ENCODE measurements at regions of chr20 and their contacts with region 1.

Region 1: DNA sequence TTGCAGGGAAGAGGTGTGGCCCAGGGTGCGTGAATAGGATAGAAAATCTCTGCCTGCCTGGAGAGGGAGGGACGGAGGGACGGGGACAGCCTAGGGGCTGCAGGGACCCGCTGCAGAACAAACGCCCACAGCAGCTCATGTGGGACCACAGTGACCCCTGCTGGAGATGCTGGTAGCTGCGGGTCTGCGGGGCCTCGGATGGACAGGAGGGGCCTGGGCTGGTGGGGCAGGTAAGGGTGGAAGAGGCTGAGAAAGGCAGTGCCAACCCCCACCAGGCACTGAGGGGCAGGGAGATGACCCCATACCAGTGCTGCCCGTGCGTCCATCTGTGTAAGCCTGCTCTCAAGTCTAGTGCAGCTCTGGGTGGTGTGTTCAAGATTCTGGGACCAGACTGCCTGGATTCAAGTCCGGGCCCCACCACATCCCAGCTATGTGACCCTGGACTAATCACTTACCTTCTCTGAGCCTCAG is 39.4 kb downstream of the KIAA1755 start:
- DNase-seq: peak; percentile 36 to 78 (median 68)
- H3K4me3 ChIP-seq: peak overlapping the region in 6 of 59 donors; percentile 1 to 34 (median 20)
- H3K27ac ChIP-seq: peak overlapping the region in 18 of 59 donors; percentile 0 to 68 (median 38)
- H3K27me3 ChIP-seq: no peaks in the 10 kb centered on the region
- CTCF ChIP-seq: peak; percentile 51 to 95 (median 86)

Region 2: DNA sequence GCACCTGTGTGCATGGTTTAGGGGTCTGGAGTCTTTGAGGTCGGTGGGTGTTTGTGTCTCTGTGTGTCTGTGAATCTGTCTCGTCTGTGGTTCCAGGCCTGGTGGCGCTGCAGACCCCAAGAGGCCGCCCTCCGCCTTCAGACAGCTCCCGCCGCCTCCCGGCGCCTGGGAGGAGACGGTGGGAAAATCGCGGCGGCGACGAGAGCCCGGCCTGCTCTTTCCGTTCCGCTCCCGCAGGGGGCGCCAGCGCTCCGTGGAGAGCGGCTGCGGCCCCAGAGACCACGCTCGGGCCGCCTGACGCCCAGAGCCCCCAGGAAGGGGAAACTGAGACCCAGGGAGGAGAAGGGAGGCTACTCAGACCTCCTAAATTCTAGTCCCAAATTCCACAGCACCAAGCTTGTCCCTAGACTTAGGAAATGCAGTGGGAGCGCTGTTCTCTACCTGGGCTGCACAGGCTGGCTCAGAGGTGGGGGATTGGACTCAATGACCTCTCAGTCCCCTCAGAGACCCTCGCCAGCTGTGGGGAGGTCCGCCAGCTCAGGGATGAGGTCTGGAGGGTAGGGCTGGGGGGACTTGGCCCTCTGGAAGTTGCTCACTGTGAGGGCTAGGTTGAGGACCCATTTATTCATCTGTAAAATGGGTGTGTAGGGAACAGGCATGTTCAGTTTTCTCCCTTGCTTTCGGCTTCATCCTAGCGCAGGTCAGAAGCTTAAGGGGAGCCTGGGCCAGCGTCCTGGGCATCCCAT is 656.6 kb before region 1 on chr20:
- intact Hi-C with region 1: loop called in 1 of 2 experiments (anchors 5 kb)
- DNase-seq: peak in 6 of 10 donors; percentile 20 to 79 (median 42)
- H3K4me3 ChIP-seq: peak overlapping the region in 10 of 59 donors; percentile 4 to 40 (median 20)
- H3K27ac ChIP-seq: no peak overlapping the region
- H3K27me3 ChIP-seq: peaks cover 0 to 32% (median 6%) of the 10 kb centered on the region in 45 donors
- CTCF ChIP-seq: peak; percentile 65 to 92 (median 84)

Region 3: DNA sequence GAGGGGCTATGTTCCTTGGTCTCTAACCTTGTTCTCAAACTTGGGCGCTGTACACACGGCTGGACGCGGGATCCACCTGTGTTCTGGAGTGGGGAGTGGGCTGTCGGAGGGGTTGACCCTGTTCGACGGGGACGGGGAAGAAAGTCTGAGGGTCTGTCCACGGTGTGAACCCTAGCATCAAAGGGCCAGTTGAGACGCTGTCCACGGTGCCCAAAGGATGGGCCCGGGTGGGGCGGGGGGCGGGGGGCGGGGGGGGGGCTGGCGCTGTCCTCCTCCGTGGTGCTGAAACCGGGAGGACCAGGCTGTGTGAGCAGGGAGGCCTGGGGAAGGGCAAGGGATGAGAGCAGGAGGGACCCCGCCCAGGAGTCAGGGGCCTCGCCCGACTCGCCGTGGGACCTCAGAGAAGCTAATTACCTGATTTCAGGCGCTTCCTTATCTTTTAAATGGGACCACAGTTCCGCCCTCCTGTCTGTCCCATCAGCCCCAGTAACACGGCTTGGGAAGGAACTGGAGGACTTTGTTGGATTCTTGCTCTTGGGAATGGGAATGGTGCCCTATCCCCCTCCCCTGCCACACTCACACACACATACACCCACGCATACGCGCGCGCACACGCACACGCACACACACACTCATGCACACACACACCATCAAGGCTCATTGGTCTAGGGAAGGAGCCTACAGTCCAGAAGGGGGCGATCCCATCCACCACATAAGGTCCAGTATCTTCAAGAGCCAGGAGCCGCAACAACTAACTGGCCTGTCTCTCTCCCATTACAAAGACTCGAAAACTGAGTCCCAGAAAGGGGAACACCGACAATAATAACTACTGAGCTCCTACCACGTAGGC is 319.3 kb before region 1 on chr20:
- intact Hi-C with region 1: loop called in 1 of 2 experiments (anchors 10 kb)
- DNase-seq: peak in 6 of 10 donors; percentile 25 to 65 (median 46)
- H3K4me3 ChIP-seq: peak overlapping the region in 52 of 59 donors; percentile 39 to 72 (median 58)
- H3K27ac ChIP-seq: no peak overlapping the region
- H3K27me3 ChIP-seq: peaks cover 0 to 48% (median 16%) of the 10 kb centered on the region in 45 donors
- CTCF ChIP-seq: peak in 47 of 56 donors; percentile 17 to 50 (median 35)

Region 4: GRCh38 chr20:38057351-38057972 is 163.7 kb before region 1 on chr20:
- intact Hi-C with region 1: loop called (anchors 5 kb)
- DNase-seq: peak; percentile 69 to 90 (median 81)
- H3K4me3 ChIP-seq: no peak overlapping the region
- H3K27ac ChIP-seq: peak overlapping the region in 1 of 59 donors; percentile 29
- H3K27me3 ChIP-seq: no peaks in the 10 kb centered on the region
- CTCF ChIP-seq: peak; percentile 79 to 99 (median 93)

Region 5: DNA sequence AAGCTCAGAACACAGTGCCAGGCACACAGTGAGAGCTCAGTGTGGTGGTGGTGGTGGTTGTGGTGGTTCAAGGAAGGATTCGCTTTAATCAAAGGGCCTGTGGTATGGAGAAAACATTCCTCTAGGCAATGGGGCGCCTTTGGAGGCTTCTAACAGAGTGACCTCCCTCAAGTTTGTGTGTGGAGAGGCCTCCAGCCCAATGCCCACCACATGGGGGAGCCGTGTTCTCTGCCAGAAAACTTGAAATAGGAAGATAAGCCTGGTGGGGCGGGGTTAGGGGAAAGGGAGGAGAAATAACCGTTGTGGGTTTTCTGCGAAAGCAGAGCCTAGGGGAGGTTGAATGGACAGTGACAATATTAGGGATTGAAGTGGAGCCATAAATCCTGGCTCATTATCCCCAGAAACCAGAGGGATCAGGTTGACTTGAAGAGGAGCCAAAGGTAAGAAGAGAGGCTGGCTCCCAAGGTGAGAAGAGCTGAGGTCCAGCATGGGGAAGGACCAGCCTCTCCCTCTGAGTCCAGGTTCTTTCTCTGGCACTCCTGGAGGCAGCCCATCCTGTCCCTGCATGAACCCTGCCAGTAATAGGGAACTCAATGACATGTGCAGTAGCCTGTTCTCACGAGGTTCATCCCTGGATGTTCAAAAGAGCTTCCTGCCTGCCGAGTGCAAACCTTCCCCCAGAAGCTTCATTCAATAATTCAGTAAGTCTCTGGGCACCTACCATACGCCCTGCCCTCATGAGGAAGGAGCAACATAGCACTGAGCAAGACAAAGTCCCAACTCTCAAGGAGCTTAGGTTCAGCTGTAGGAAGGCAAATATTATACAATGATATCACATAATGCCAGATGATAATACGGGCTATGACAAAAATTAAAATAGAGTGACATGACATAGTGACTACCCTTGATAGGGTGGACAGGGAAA is 107.5 kb before region 1 on chr20:
- intact Hi-C with region 1: no loop called
- DNase-seq: no peak
- H3K4me3 ChIP-seq: no peak overlapping the region
- H3K27ac ChIP-seq: no peak overlapping the region
- H3K27me3 ChIP-seq: no peaks in the 10 kb centered on the region
- CTCF ChIP-seq: peak in 12 of 56 donors; percentile 7 to 25 (median 17)

Region 6: GRCh38 chr20:38315290-38315966 is 94.3 kb after region 1 on chr20:
- intact Hi-C with region 1: loop called in 1 of 2 experiments (anchors 5 kb)
- DNase-seq: peak in 2 of 10 donors; percentile 47 to 61
- H3K4me3 ChIP-seq: no peak overlapping the region
- H3K27ac ChIP-seq: no peak overlapping the region
- H3K27me3 ChIP-seq: no peaks in the 10 kb centered on the region
- CTCF ChIP-seq: peak in 46 of 56 donors; percentile 13 to 71 (median 45)

Region 7: DNA sequence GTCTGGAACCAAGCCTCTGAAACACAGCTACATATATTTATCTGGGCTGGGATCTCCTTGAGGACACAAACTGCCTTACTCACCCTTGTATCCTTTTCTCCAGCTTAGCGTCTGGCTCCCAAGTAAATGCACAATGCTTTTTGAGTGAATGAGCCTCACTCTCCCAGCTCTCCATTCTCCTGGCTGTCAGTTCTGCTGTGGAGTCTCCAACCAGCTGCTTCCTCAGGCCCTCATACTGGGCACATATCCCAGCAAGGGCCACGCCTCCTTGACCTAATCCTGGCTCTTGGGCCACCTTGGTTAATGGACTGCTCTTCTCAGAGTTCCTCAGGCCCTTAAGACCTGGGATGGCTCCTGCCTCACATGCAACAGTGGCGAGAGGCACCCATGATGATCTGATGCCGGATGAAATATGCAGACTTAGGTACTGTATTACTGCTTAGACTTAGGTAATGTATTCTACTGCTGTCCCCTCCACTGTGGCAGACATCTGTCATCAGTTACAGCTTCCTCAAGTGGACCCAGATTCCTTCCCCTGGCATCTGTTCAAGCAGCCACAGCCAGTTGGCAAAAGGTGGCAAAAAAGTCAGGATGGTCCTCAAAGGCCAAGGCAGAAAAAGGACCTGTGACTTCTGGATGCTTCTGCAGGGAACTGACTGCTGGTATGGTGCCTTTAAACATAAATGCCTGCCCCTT is 197.5 kb after region 1 on chr20:
- intact Hi-C with region 1: loop called in 1 of 2 experiments (anchors 10 kb)
- DNase-seq: peak in 3 of 10 donors; percentile 22 to 48 (median 24)
- H3K4me3 ChIP-seq: no peak overlapping the region
- H3K27ac ChIP-seq: peak overlapping the region in 35 of 59 donors; percentile 3 to 87 (median 40)
- H3K27me3 ChIP-seq: no peaks in the 10 kb centered on the region
- CTCF ChIP-seq: no peak